Sigmoid colon (tissue), 7 donors: ENCODE measurements at regions of chr6 and their contacts with region 1.

Region 1: DNA sequence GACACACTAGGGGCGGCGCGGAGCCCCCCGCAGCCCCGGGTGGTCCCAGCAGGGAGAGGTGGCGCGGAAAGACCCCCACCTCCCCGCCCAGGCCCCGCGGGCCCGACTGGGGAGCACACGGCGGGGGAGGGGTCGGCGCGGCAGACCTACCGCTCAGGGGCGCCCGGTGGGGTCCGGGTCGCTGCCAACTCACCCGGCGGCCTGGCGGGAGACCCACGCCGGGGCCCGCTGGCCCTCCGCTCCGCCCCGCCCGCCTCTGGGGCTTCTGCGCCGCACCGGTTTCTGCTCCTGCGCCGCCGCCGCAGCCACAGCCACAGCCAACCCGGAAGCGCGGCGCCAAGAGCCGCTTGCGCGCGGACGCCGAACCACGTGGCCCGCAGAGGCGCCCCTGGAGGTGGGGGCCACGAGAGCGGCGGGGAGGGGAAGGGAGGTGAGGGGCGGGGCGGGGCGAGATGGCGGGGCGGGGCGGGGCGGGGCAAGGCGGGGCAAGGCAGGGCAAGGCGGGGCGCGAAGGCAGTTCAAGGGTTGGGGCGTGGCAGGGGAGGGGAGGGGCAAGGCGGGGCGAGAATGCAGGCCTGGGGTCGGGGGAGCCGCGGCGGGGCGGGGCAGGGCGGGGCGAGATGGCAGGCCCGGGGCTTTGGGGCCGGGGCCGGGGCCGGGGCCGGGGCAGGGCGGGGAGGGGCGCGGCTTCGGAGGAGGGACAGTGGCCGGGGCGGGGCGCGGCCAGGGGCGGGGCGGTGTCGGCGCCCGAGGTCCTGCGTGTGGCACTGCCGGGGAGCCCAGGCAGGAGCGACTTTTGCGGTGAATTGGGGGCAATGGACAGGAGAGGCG is at the start of gene ZBTB24:
- DNase-seq: peak; percentile 95
- H3K4me3 ChIP-seq: peak within 1 kb of the TSS; percentile 76 to 100 (median 88)
- H3K27ac ChIP-seq: peak within 1 kb of the TSS; percentile 77 to 90 (median 84)
- H3K4me1 ChIP-seq: peaks cover 3 to 44% (median 42%) of the 10 kb centered on the region in 4 donors
- H3K27me3 ChIP-seq: no peaks in the 10 kb centered on the region
- CTCF ChIP-seq: no peak
- EP300 ChIP-seq: no peak
- POLR2A ChIP-seq: no peak
- total RNA-seq, gene ZBTB24: 4.6 to 8.2 (median 6.3) TPM

Region 2: DNA sequence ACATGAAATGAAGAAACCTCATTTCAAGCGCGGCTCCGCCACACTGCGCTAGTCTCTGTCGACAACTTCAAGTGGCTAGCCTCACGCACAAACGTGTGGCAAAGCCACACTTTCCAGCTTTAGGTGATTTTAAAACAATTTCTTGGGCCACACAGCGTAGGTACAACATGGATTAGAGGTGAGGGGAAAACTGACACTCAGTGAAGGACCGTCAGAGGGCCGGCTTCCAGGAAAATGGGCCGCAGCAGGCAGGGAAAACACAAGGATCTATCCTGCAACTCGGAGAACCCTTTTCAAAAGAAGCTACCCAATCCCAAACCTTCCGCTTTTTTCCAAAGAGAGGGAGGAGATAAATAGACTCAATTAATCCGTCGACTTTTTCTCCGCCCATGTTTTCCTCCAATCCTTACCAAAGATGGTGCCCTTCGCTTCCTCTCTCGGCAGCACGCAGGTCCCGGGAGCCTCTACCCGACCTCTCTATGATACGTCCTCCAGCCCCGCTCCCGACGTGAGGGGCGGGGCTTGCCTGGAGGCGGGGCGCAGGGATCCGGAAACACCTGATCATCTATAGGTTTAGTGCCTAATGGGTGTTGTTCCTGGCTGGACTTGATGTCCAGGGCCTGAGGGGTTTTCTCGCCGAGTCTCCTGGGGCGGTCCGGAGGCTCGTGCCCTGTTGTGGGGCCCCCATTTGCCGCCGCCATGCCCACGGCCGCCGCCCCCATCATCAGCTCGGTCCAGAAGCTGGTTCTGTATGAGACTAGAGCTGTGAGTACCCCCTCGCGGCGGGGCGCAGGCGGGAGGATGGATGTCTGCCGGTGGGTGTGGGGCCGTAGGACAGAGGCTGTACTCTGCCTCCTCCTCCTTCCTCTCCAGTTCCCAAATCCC is 207.9 kb after region 1 on chr6 and contains the starts of genes AK9 and FIG4:
- intact Hi-C with region 1: loop called (anchors 5 kb)
- DNase-seq: peak; percentile 96
- H3K4me3 ChIP-seq: peak within 1 kb of the TSS; percentile 55 to 79 (median 68)
- H3K27ac ChIP-seq: peak within 1 kb of the TSS; percentile 88 to 92 (median 90)
- H3K4me1 ChIP-seq: peaks cover 0 to 29% (median 12%) of the 10 kb centered on the region in 4 donors
- H3K27me3 ChIP-seq: no peaks in the 10 kb centered on the region
- CTCF ChIP-seq: no peak
- EP300 ChIP-seq: peak in 1 of 4 donors; percentile 18
- POLR2A ChIP-seq: peak; percentile 22 to 33
- total RNA-seq, gene AK9: 14.3 to 23.3 (median 16.2) TPM
- total RNA-seq, gene FIG4: 11.9 to 24.1 (median 22.8) TPM